ENCODE measurements at regions of chr17 and their contacts with region 1.

Region 1: DNA sequence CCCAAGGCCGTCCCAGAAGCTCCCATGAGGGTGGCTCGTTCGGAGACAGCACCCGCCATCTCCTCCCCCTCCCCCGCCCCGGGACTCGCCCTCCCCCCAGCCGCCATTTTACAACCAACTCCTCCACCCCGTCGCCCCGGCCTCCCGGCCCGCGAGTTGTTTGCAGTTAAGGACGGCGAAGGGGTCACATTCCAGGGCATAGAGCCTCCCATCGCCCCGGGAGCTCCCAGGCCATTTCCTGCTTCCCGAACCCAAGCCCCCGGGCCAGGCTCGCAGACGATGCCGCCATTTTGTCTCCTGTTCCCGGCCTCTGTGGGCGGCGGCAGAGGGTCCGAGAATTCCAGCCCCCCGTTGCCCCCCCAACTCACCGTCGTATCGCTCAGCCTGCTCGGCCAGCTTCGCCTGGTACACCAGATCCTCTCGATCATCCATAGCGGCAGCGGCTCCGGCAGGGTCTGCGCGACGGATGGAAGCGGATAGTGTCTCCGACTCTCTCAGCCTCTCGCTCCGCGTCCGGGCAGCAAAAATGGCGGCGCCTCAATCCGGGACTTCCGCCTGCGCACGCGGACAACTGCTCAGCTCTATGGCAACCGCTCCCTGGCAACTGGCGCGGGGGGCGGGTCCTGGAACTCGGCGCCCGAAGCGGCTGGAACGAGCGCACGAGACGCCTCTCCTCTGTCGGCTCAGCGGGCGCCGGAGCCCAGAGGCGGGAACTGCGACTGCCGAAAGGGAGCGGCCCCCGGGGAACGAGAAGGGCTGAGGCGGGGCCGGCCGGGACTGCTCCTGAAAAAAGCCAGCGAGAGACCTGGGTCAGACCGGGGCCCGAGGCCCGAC is at the start of gene YWHAE:
- DNase-seq: peak; percentile 99
- H3K4me3 ChIP-seq: peak within 1 kb of the TSS; percentile 97
- H3K27ac ChIP-seq: peak within 1 kb of the TSS; percentile 98
- H3K4me1 ChIP-seq: peaks cover 16% of the 10 kb centered on the region
- H3K27me3 ChIP-seq: no peaks in the 10 kb centered on the region
- CTCF ChIP-seq: no peak
- total RNA-seq, gene YWHAE: 1,404 and 1,447 TPM in 2 replicates

Region 2: DNA sequence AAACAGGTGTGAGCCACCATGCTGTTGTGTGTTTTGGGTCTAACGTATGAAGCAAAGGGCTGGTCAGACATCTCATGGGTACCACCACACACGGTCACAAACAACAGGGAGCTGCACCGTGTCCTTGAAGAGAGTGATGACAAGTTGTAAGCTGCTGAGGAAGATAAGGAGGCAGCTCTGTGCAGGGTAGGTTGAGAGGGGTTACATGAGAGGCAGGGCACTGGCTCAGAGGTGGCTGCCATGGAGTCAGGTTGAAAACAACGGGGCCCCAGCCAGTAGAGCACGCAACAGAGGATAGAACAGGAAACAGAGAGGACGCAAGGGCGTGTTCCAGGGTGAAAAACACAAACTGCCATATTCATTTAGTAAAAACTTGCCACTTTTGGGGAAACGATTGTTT is 68.2 kb before region 1 on chr17:
- CTCF ChIA-PET with region 1: no interaction called
- POLR2A ChIA-PET with region 1: interaction called, 14 read pairs
- intact Hi-C with region 1: no loop called
- DNase-seq: no peak
- H3K4me3 ChIP-seq: no peak overlapping the region
- H3K27ac ChIP-seq: no peak overlapping the region
- H3K4me1 ChIP-seq: no peaks in the 10 kb centered on the region
- H3K27me3 ChIP-seq: no peaks in the 10 kb centered on the region
- CTCF ChIP-seq: no peak

Region 3: GRCh38 chr17:1422907-1423306 is 23.0 kb after region 1 on chr17:
- CTCF ChIA-PET with region 1: no interaction called
- POLR2A ChIA-PET with region 1: interaction called, 17 read pairs
- intact Hi-C with region 1: no loop called
- DNase-seq: peak; percentile 83
- H3K4me3 ChIP-seq: no peak overlapping the region
- H3K27ac ChIP-seq: peak overlapping the region; percentile 15
- H3K4me1 ChIP-seq: peaks cover 8% of the 10 kb centered on the region
- H3K27me3 ChIP-seq: no peaks in the 10 kb centered on the region
- CTCF ChIP-seq: no peak

Region 4: GRCh38 chr17:1434150-1434549 is 34.3 kb after region 1 on chr17:
- CTCF ChIA-PET with region 1: no interaction called
- POLR2A ChIA-PET with region 1: interaction called, 14 read pairs
- intact Hi-C with region 1: no loop called
- DNase-seq: no peak
- H3K4me3 ChIP-seq: no peak overlapping the region
- H3K27ac ChIP-seq: no peak overlapping the region
- H3K4me1 ChIP-seq: peaks cover 9% of the 10 kb centered on the region
- H3K27me3 ChIP-seq: no peaks in the 10 kb centered on the region
- CTCF ChIP-seq: no peak

Measured in A673 (cell line).